B cell (primary cell): ENCODE measurements at regions of chr7 and their contacts with region 1.

Region 1: DNA sequence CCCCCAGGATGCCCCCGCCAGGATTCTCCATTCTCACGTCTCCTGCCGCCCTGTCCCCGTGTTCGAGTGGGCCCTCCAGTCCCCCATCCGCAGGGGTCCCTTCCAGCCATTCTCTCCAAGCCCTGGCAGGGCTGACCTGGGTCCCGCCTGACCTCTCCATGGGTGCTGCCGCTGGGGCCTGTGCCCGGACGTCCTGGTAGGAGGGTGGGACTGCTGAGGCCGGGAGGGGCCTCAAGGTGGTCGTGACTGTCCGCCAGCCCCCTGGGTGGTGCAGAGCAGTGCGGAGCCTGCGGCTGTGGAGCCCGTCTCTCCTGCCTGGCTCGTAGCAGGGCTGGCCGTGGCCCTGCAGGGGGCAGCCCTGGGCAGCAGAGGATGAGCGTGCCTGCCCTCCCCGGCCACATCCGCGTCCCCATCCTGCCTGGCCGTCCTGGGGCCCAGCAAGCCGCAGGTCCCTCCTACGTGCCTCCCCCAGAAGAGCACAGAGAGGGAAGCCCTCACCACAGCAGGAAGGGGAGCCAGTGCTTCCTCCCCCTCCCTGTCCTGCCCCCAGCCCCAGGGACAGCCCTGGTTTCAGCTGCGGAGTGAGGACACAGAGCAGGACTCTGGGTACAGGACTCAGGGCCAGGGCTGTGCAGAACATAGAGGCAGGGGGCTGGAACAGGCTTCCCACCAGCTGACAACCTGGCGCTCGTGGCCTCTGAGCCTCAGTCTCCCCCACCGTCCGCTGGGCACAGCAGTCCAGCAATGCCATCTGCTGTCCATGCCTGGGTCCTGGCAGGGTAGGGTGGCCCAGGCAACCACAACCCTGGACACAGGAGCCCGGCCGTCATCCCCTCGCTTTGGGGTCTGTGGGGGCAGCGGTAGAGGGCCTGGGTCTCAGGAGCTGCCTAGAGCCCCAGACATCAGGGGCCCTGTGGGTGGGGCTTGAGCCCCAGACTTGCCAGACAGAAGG is 1.5 kb upstream of the GRIFIN start:
- DNase-seq: peak; percentile 78
- ATAC-seq: peak; percentile 99
- H3K4me3 ChIP-seq: peak overlapping the region in 3 of 5 experiments; percentile 5 to 21 (median 12)
- H3K4me3 Mint-ChIP-seq: peak overlapping the region; percentile 47
- H3K27ac ChIP-seq: no peak overlapping the region
- H3K27ac Mint-ChIP-seq: no peak overlapping the region
- H3K4me1 ChIP-seq: peaks cover 14 to 17% of the 10 kb centered on the region in 2 donors
- H3K4me1 Mint-ChIP-seq: peaks cover 12% of the 10 kb centered on the region
- H3K27me3 ChIP-seq: peaks cover 0 to 4% (median 2%) of the 10 kb centered on the region in 4 experiments
- H3K27me3 Mint-ChIP-seq: no peaks in the 10 kb centered on the region
- CTCF ChIP-seq: peak; percentile 72

Region 2: GRCh38 chr7:2266908-2267307 is 210.8 kb before region 1 on chr7:
- CTCF ChIA-PET with region 1: no interaction called
- POLR2A ChIA-PET with region 1: no interaction called
- intact Hi-C with region 1: no loop called
- DNase-seq: no peak
- ATAC-seq: no peak
- H3K4me3 ChIP-seq: no peak overlapping the region
- H3K4me3 Mint-ChIP-seq: no peak overlapping the region
- H3K27ac ChIP-seq: no peak overlapping the region
- H3K27ac Mint-ChIP-seq: no peak overlapping the region
- H3K4me1 ChIP-seq: peaks cover 7 to 8% of the 10 kb centered on the region in 2 donors
- H3K4me1 Mint-ChIP-seq: peaks cover 10% of the 10 kb centered on the region
- H3K27me3 ChIP-seq: no peaks in the 10 kb centered on the region
- H3K27me3 Mint-ChIP-seq: no peaks in the 10 kb centered on the region
- CTCF ChIP-seq: no peak

Region 3: GRCh38 chr7:2462731-2463130 is 15.0 kb before region 1 on chr7:
- CTCF ChIA-PET with region 1: no interaction called
- POLR2A ChIA-PET with region 1: no interaction called
- intact Hi-C with region 1: no loop called
- DNase-seq: no peak
- ATAC-seq: no peak
- H3K4me3 ChIP-seq: no peak overlapping the region
- H3K4me3 Mint-ChIP-seq: no peak overlapping the region
- H3K27ac ChIP-seq: no peak overlapping the region
- H3K27ac Mint-ChIP-seq: no peak overlapping the region
- H3K4me1 ChIP-seq: no peaks in the 10 kb centered on the region
- H3K4me1 Mint-ChIP-seq: peaks cover 2% of the 10 kb centered on the region
- H3K27me3 ChIP-seq: no peaks in the 10 kb centered on the region
- H3K27me3 Mint-ChIP-seq: no peaks in the 10 kb centered on the region
- CTCF ChIP-seq: no peak

Region 4: DNA sequence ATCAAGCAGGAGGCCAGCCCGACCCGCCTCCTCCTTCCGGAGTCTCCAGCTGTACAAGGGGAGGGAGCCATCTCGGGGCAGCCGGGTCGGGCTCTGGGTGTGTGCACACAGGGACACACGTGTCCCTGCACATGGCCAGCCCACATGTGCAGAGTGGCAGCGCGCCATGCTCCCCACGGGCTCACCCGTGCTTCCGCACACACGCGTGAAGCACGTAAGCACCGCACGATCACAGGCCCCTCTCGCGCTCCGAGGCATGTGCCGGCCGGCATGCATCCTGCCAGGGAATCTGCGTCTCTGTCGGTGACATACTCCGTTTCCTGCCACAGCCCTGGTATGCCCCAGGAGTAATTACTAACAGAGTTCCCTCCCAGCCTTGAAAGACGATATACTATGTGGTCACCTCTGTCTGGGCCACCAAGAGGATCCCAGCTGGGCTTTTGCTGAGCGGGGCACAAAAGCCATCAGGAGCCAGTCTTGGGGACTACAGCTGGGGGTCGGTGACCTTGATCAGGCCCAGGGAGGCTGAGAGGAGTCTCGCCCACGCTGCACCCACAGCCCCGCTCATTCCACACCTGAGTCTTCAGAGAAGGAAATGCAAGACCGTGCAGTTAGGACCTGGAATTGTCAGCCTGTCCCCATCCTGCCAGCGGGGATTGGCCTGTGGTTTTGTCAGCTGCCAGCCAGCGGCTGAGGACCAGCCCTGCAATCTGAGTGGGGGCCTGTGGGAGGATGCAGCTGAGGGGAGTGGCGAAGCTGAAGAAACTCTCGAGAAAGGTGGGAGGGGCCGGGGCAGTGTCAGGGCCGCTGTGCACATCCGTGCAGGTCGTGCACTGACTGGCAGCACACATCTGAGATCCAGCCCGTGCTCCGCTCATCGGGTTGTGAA is 30.8 kb after region 1 on chr7:
- CTCF ChIA-PET with region 1: interaction called, 11 read pairs
- POLR2A ChIA-PET with region 1: interaction called, 3 read pairs
- intact Hi-C with region 1: loop called (anchors 2 kb)
- DNase-seq: peak; percentile 90
- ATAC-seq: peak; percentile 48
- H3K4me3 ChIP-seq: peak overlapping the region in 4 of 5 experiments; percentile 25 to 46 (median 34)
- H3K4me3 Mint-ChIP-seq: peak overlapping the region; percentile 88
- H3K27ac ChIP-seq: peak overlapping the region; percentile 99 to 100
- H3K27ac Mint-ChIP-seq: peak overlapping the region; percentile 99
- H3K4me1 ChIP-seq: peaks cover 58 to 63% of the 10 kb centered on the region in 2 donors
- H3K4me1 Mint-ChIP-seq: peaks cover 67% of the 10 kb centered on the region
- H3K27me3 ChIP-seq: no peaks in the 10 kb centered on the region
- H3K27me3 Mint-ChIP-seq: no peaks in the 10 kb centered on the region
- CTCF ChIP-seq: no peak

Region 5: DNA sequence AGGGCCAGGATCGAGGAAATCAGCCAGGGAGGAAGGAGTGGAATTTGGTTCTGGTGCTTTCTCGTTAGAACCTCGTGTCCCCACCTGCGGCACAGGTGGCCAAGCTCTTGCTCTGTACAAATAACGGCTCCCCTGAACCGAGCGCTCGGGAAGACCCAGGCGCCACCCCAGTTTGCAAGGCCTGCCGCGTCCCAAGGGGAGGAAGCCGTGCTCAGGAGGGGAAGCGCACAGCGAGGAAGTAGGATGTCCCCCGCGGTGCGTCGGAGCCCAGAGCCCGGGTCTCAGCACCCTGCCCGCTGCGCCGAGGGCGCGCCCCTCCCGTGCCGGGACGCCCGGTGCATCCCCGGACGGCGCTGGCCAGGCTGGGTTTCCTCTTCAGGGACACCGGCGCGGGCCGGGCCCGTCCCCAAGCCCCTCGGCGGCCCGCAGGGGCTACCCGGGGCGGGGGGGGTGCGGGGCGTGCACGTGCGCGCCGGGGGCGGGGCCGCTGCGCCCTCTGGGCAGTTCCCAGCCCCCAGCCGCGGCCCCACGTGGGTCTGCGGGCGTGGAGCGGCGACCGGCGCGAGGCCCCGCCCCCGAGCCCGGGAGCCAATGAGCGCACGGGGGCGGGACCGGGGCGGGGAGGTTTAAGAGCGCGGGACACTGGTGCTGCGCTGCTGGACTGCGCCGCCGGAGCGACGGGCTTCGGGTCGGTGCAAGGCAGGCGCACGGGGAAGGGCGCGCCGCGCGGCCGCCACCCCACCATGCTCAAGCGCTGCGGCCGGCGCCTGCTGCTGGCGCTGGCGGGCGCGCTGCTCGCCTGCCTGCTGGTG is 41.6 kb after region 1 on chr7 and contains the start of gene LFNG:
- CTCF ChIA-PET with region 1: interaction called, 6 read pairs
- POLR2A ChIA-PET with region 1: no interaction called
- intact Hi-C with region 1: loop called (anchors 2 kb)
- DNase-seq: peak; percentile 94
- ATAC-seq: peak; percentile 80
- H3K4me3 ChIP-seq: peak within 1 kb of the TSS; percentile 84 to 100 (median 97)
- H3K4me3 Mint-ChIP-seq: peak within 1 kb of the TSS; percentile 99
- H3K27ac ChIP-seq: peak within 1 kb of the TSS; percentile 62 to 75
- H3K27ac Mint-ChIP-seq: peak within 1 kb of the TSS; percentile 96
- H3K4me1 ChIP-seq: peaks cover 40 to 49% of the 10 kb centered on the region in 2 donors
- H3K4me1 Mint-ChIP-seq: peaks cover 52% of the 10 kb centered on the region
- H3K27me3 ChIP-seq: no peaks in the 10 kb centered on the region
- H3K27me3 Mint-ChIP-seq: no peaks in the 10 kb centered on the region
- CTCF ChIP-seq: no peak
- total RNA-seq, gene LFNG: 208 and 221 TPM in 2 replicates

Region 6: GRCh38 chr7:2529161-2530070 is 51.7 kb after region 1 on chr7:
- CTCF ChIA-PET with region 1: interaction called, 7 read pairs
- POLR2A ChIA-PET with region 1: no interaction called
- intact Hi-C with region 1: loop called (anchors 1 kb)
- DNase-seq: peak; percentile 94
- ATAC-seq: peak; percentile 65
- H3K4me3 ChIP-seq: peak overlapping the region in 4 of 5 experiments; percentile 38 to 52 (median 43)
- H3K4me3 Mint-ChIP-seq: peak overlapping the region; percentile 90
- H3K27ac ChIP-seq: peak overlapping the region; percentile 97
- H3K27ac Mint-ChIP-seq: peak overlapping the region; percentile 99
- H3K4me1 ChIP-seq: peaks cover 66 to 74% of the 10 kb centered on the region in 2 donors
- H3K4me1 Mint-ChIP-seq: peaks cover 67% of the 10 kb centered on the region
- H3K27me3 ChIP-seq: no peaks in the 10 kb centered on the region
- H3K27me3 Mint-ChIP-seq: no peaks in the 10 kb centered on the region
- CTCF ChIP-seq: no peak

Region 7: DNA sequence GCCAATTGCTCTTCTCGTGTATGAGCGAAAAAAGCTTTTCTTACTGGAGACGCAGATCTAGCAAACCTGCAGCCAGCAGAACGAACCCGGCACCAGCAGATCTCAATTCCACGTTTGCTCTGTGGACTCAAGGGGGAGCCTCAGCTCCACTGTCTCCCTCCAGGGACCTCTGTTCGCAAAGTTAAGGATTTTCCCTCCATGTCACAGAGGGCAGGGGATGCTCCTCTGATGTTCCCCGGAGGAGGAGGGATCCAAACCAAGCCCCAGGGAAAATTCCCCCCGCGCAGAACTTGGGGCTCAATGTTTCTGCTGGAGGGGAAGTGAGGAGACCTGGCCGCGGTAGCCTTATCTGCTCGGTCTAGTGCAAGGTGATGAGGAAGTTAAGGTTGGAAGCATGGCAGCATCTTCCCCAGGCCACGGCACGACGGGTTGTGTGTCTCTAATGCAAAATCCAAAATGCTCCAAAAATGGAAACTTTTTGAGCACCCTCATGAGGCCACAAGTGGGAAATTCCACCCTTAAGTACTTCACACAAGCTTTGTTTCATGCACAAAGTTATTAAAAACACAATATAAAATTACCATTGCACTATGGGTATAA is 90.1 kb after region 1 on chr7:
- CTCF ChIA-PET with region 1: interaction called, 5 read pairs
- POLR2A ChIA-PET with region 1: no interaction called
- intact Hi-C with region 1: loop called (anchors 1 kb)
- DNase-seq: peak; percentile 54
- ATAC-seq: peak; percentile 62
- H3K4me3 ChIP-seq: peak overlapping the region in 3 of 5 experiments; percentile 1 to 48 (median 22)
- H3K4me3 Mint-ChIP-seq: peak overlapping the region; percentile 55
- H3K27ac ChIP-seq: no peak overlapping the region
- H3K27ac Mint-ChIP-seq: peak overlapping the region; percentile 56
- H3K4me1 ChIP-seq: peaks cover 11 to 16% of the 10 kb centered on the region in 2 donors
- H3K4me1 Mint-ChIP-seq: peaks cover 18% of the 10 kb centered on the region
- H3K27me3 ChIP-seq: no peaks in the 10 kb centered on the region
- H3K27me3 Mint-ChIP-seq: no peaks in the 10 kb centered on the region
- CTCF ChIP-seq: no peak

Region 8: DNA sequence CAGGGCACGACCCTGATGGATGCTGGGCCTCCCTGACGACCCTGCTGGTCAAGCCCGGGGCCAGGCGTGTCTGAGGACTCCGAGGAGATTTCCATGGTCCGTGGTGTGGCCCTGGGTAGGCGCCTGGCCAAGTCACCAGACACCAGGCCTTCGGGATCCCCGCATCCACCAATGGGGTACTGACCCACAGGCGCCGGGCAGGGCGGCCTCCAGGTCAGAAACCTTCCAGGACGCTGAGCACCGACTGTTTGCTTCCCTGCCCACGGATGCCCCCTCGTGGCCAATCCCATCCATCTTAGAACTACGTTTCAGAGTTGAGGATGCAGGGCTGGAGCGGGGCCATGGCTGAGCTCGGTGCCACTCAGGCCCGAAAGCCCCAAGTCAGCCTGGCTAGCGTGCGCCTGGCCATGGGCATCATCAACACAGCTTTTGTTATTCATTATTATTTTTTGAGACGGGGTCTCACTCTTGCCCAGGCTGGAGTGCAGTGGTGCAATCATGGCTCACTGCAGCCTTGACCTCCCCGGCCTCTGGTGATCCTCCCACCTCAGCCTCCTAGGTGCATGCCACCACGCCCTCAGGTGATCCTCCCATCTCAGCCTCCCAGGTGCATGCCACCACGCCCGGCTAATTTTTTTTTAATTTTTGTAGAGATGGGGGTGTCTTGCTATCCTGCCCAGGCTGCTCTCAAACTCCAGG is 203.2 kb after region 1 on chr7:
- CTCF ChIA-PET with region 1: interaction called, 18 read pairs
- POLR2A ChIA-PET with region 1: no interaction called
- intact Hi-C with region 1: loop called (anchors 1 kb)
- DNase-seq: peak; percentile 74
- ATAC-seq: peak; percentile 73
- H3K4me3 ChIP-seq: no peak overlapping the region
- H3K4me3 Mint-ChIP-seq: no peak overlapping the region
- H3K27ac ChIP-seq: no peak overlapping the region
- H3K27ac Mint-ChIP-seq: no peak overlapping the region
- H3K4me1 ChIP-seq: peaks cover 0 to 4% of the 10 kb centered on the region in 2 donors
- H3K4me1 Mint-ChIP-seq: no peaks in the 10 kb centered on the region
- H3K27me3 ChIP-seq: peaks cover 0 to 6% (median under 1%) of the 10 kb centered on the region in 4 experiments
- H3K27me3 Mint-ChIP-seq: peaks cover 12% of the 10 kb centered on the region
- CTCF ChIP-seq: peak; percentile 68